ENCODE measurements at regions of chr1 and their contacts with region 1.

Region 1: DNA sequence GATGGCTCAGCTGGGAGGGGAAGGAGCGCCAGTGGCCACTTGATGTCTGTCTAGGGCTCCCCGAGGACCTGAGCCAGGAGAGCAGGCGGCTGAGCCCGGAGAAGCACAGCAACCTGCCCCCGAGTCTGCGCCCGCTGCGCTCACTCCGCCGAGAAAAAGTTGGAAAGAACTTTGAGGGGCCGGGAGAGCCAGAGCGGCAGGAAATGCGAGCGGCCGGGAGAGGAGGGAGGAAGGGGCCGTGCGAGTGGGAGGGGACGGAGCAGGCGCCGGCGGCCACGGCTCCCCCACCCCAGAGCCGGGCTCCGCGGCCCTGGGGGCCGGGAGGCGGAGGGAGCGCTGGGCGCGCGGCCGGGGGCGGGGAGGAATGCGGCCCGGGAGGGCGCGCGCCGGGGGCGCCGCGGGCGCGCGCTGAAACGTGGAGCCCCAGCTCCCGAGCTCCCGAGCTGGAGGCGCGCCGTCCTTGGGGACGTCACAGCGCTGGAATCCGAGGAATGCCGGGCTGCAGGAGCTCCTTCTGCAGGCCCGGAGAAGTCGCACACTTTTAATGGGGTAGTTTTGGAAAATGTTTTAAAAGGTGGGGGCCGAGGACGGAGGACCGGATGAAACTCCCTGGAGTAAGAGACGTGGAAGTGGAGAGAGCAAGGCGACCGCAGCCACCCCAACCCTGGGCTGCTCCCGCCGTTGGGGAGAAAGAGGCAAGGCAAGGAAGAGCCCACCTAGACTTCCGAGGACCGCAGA is at the start of gene PTPN14:
- DNase-seq: peak; percentile 92
- ATAC-seq: peak; percentile 92
- total RNA-seq, gene PTPN14: 25.1 TPM

Region 2: DNA sequence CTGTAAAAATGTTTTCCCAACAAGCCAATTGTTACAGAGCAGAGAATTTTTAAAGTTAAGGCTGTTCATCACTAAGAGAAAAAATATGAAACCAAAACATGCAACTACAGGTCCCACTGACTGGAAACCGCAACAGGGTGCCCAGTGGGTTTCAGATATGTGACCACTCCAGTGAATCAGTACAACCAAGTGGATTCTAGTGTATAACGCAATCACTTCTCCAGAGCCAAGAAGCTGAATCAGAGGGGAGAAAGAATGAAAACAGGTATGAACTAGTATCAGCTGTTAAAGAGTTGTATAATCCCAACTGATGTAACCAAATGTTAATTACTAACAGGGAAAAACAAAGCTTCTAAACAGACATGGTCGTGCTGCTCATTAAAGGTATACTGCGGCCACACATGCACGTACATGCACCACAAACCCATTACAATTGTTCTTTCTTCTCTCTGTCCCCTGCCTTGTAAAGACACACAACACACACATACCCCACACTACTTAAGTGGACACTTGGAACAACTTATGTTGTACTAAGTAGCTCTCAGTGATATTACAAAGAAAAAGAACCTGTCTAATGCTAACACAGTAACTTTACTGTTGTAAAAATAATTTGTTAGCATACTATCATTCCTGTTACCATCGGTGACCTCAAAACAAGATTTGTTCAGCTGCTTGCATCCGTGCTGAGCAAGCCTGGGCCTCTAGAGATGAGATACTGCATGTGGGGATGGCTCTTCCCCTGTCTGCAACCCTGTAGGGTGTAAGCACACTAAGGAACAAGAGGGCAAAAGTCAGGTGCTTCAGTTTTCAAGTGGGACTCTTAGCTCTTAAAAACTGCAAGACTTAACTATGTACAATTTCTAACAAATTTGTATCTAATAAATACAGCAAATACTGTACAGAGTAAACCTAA is 74.4 kb before region 1 on chr1:
- intact Hi-C with region 1: loop called (anchors 10 kb)
- DNase-seq: no peak
- ATAC-seq: no peak

Region 3: GRCh38 chr1:214923278-214923915 is 371.8 kb after region 1 on chr1:
- intact Hi-C with region 1: no loop called
- DNase-seq: no peak
- ATAC-seq: no peak

Measured in Right ventricle myocardium superior (tissue), 1 donor.